ENCODE measurements at regions of chr4 and their contacts with region 1.

Region 1: GRCh38 chr4:106996490-106996889 is 39.6 kb downstream of the DKK2 start:
- DNase-seq: no peak
- H3K27ac ChIP-seq: no peak overlapping the region
- CTCF ChIP-seq: no peak

Region 2: GRCh38 chr4:107050525-107051135 is 54.1 kb after region 1 on chr4:
- CTCF ChIA-PET with region 1: no interaction called
- POLR2A ChIA-PET with region 1: no interaction called
- DNase-seq: peak; percentile 13
- H3K27ac ChIP-seq: no peak overlapping the region
- CTCF ChIP-seq: peak; percentile 66

Region 3: DNA sequence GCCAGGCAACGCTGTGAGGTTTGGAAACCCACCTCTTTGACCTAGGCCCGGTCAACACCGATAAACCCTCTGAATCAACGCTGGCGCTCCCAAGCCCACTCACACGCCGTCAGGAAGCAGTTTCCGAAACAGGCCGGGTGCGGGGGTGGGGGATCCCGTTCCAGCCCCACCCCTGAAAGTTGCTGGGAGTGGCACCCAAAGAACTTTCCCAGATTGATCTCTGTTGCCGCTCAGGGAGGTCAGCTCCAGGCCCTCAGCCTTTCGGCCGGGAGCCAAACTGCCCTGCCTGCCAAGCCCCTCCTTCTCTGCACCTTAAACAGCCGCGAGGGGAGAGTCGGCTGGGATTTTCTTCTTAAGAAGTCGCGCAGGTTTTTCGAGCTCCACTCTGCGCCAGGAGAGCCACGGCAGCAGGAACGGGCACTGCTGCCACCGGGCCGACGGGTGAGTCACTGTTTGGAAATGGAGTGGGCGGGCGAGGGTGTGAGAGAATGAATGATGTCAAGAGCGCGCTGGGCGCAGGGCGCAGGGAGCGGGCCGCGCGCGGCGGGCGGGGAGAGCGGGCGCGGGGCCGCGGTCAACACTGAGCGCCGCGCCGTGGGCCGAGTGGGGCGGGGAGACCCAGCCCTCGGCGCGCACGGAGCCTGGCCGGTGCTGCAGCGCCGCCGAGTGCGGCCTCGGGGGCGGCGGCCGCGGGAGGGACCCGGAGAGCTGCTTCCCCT is 828.0 kb after region 1 on chr4 and contains the start of gene SGMS2:
- CTCF ChIA-PET with region 1: interaction called, 10 read pairs
- POLR2A ChIA-PET with region 1: no interaction called
- DNase-seq: peak; percentile 91
- H3K27ac ChIP-seq: peak within 1 kb of the TSS; percentile 97
- CTCF ChIP-seq: no peak

Measured in RWPE1 (cell line).